ENCODE measurements at regions of chr5 and their contacts with region 1.

Region 1: GRCh38 chr5:172106511-172107356 is 81.3 kb downstream of the STK10 start:
- DNase-seq: peak; percentile 66 to 79 (median 75)
- ATAC-seq: peak; percentile 72
- H3K4me3 ChIP-seq: no peak overlapping the region
- H3K27ac ChIP-seq: no peak overlapping the region
- H3K4me1 ChIP-seq: peaks cover 25 to 45% of the 10 kb centered on the region in 2 experiments; a peak in 4 of 5 replicates
- H3K27me3 ChIP-seq: peaks cover 0 to 5% of the 10 kb centered on the region in 2 experiments; a peak in 1 of 5 replicates
- CTCF ChIP-seq: peak; percentile 86 to 95 (median 87)
- EP300 ChIP-seq: no peak
- POLR2A ChIP-seq: no peak
- RAD21 ChIP-seq: peak; percentile 85 to 86

Region 2: DNA sequence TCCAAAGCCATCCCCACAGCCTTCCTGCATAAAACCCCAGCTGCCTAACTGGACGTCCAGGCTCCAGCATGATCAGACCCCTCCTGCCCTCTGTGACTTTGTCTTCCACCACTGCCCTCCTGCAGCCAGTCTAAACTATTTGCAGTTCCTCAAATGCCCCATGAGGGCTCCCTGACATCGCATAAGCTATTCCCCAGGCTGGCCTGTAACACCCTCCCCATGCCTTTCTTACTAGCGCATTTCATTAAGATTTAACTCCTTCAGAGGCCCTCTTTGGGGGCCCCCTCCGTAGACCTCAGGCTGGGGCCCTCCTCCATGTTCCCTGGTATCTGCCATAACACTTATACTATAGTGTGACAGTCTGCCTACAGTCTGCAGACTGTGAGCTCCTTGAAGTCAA is 336.6 kb before region 1 on chr5:
- CTCF ChIA-PET with region 1: no interaction called
- POLR2A ChIA-PET with region 1: no interaction called
- in situ Hi-C with region 1: no loop called
- intact Hi-C with region 1: no loop called
- DNase-seq: no peak
- ATAC-seq: no peak
- H3K4me3 ChIP-seq: no peak overlapping the region
- H3K27ac ChIP-seq: no peak overlapping the region
- H3K4me1 ChIP-seq: no peaks in the 10 kb centered on the region
- H3K27me3 ChIP-seq: peaks cover 10 to 30% of the 10 kb centered on the region in 2 experiments; a peak in 3 of 5 replicates
- CTCF ChIP-seq: peak in 1 of 3 experiments; percentile 24; a peak in 2 of 6 replicates
- EP300 ChIP-seq: no peak
- POLR2A ChIP-seq: no peak
- RAD21 ChIP-seq: peak in 1 of 2 experiments; percentile 34; a peak in 1 of 4 replicates

Region 3: GRCh38 chr5:171907725-171908343 is 198.9 kb before region 1 on chr5:
- CTCF ChIA-PET with region 1: no interaction called
- POLR2A ChIA-PET with region 1: no interaction called
- in situ Hi-C with region 1: no loop called
- intact Hi-C with region 1: no loop called
- DNase-seq: peak; percentile 48 to 73 (median 67)
- ATAC-seq: peak; percentile 96
- H3K4me3 ChIP-seq: no peak overlapping the region
- H3K27ac ChIP-seq: no peak overlapping the region
- H3K4me1 ChIP-seq: no peaks in the 10 kb centered on the region
- H3K27me3 ChIP-seq: no peaks in the 10 kb centered on the region
- CTCF ChIP-seq: peak; percentile 51 to 74 (median 73); a peak in 5 of 6 replicates
- EP300 ChIP-seq: no peak
- POLR2A ChIP-seq: no peak
- RAD21 ChIP-seq: peak; percentile 77 to 78

Region 4: GRCh38 chr5:172188033-172188892 is 81.5 kb after region 1 on chr5 and contains the start of gene STK10:
- CTCF ChIA-PET with region 1: interaction called, 26 read pairs
- POLR2A ChIA-PET with region 1: interaction called, 3 read pairs
- in situ Hi-C with region 1: loop called (anchors 5 kb)
- intact Hi-C with region 1: loop called (anchors 1 kb)
- DNase-seq: peak; percentile 85 to 91 (median 88)
- ATAC-seq: peak; percentile 90
- H3K4me3 ChIP-seq: peak within 1 kb of the TSS; percentile 60
- H3K27ac ChIP-seq: no peak within 1 kb of the TSS; the same call in 2 of the 3 replicates
- H3K4me1 ChIP-seq: peaks cover 7 to 19% of the 10 kb centered on the region in 2 experiments; a peak in 3 of 5 replicates
- H3K27me3 ChIP-seq: no peaks in the 10 kb centered on the region
- CTCF ChIP-seq: peak; percentile 91 to 94 (median 94)
- EP300 ChIP-seq: no peak
- POLR2A ChIP-seq: peak; percentile 52
- RAD21 ChIP-seq: peak; percentile 98 to 99
- polyA plus RNA-seq, gene STK10: 0.30 to 0.55 TPM

Region 5: GRCh38 chr5:172361566-172362238 is 255.0 kb after region 1 on chr5:
- CTCF ChIA-PET with region 1: no interaction called
- POLR2A ChIA-PET with region 1: no interaction called
- in situ Hi-C with region 1: loop called (anchors 10 kb)
- intact Hi-C with region 1: no loop called
- DNase-seq: no peak
- ATAC-seq: peak; percentile 73
- H3K4me3 ChIP-seq: no peak overlapping the region
- H3K27ac ChIP-seq: no peak overlapping the region; the same call in 2 of the 3 replicates
- H3K4me1 ChIP-seq: no peaks in the 10 kb centered on the region; a peak in 1 of 5 replicates
- H3K27me3 ChIP-seq: peaks cover 2 to 32% of the 10 kb centered on the region in 2 experiments; a peak in 4 of 5 replicates
- CTCF ChIP-seq: no peak
- EP300 ChIP-seq: no peak
- POLR2A ChIP-seq: no peak
- RAD21 ChIP-seq: no peak

Region 6: GRCh38 chr5:172437445-172438308 is 330.9 kb after region 1 on chr5:
- CTCF ChIA-PET with region 1: no interaction called
- POLR2A ChIA-PET with region 1: no interaction called
- in situ Hi-C with region 1: no loop called
- intact Hi-C with region 1: no loop called
- DNase-seq: peak in 1 of 4 experiments; percentile 17
- ATAC-seq: peak; percentile 72
- H3K4me3 ChIP-seq: no peak overlapping the region
- H3K27ac ChIP-seq: no peak overlapping the region
- H3K4me1 ChIP-seq: peaks cover 0 to 6% of the 10 kb centered on the region in 2 experiments; a peak in 4 of 5 replicates
- H3K27me3 ChIP-seq: peaks cover 29 to 77% of the 10 kb centered on the region in 2 experiments
- CTCF ChIP-seq: no peak
- EP300 ChIP-seq: no peak
- POLR2A ChIP-seq: no peak
- RAD21 ChIP-seq: no peak

Region 7: GRCh38 chr5:172454358-172455086 is 347.8 kb after region 1 on chr5 and contains the start of gene SH3PXD2B:
- CTCF ChIA-PET with region 1: no interaction called
- POLR2A ChIA-PET with region 1: interaction called, 3 read pairs
- in situ Hi-C with region 1: loop called (anchors 10 kb)
- intact Hi-C with region 1: loop called (anchors 10 kb)
- DNase-seq: peak; percentile 59 to 90 (median 80)
- ATAC-seq: peak; percentile 82
- H3K4me3 ChIP-seq: peak within 1 kb of the TSS; percentile 40
- H3K27ac ChIP-seq: no peak within 1 kb of the TSS
- H3K4me1 ChIP-seq: peaks cover 3 to 12% of the 10 kb centered on the region in 2 experiments; a peak in 3 of 5 replicates
- H3K27me3 ChIP-seq: peaks cover 5 to 42% of the 10 kb centered on the region in 2 experiments; a peak in 4 of 5 replicates
- CTCF ChIP-seq: no peak
- EP300 ChIP-seq: no peak
- POLR2A ChIP-seq: no peak
- RAD21 ChIP-seq: no peak
- polyA plus RNA-seq, gene SH3PXD2B: 0.11 to 0.17 TPM